Naive thymus-derived CD4-positive, alpha-beta T cell (primary cell): ENCODE measurements at regions of chr10 and their contacts with region 1.

Region 1: GRCh38 chr10:46030091-46030937 is at the start of gene NCOA4:
- DNase-seq: peak; percentile 88 to 96 (median 93)
- ATAC-seq: peak; percentile 98
- H3K4me3 ChIP-seq: peak within 1 kb of the TSS; percentile 70
- H3K4me3 Mint-ChIP-seq: peak within 1 kb of the TSS; percentile 89 to 100 (median 96)
- H3K27ac ChIP-seq: peak within 1 kb of the TSS; percentile 93
- H3K27ac Mint-ChIP-seq: peak within 1 kb of the TSS; percentile 89 to 99 (median 96)
- H3K4me1 ChIP-seq: peaks cover 27 to 42% of the 10 kb centered on the region in 2 donors
- H3K4me1 Mint-ChIP-seq: peaks cover 44 to 57% (median 55%) of the 10 kb centered on the region in 7 donors
- H3K27me3 ChIP-seq: no peaks in the 10 kb centered on the region
- H3K27me3 Mint-ChIP-seq: peaks cover 0 to 4% (median 0%) of the 10 kb centered on the region in 5 donors
- total RNA-seq, gene NCOA4: 54.6 to 126 (median 78.4) TPM

Region 2: GRCh38 chr10:45235798-45236231 is 794.5 kb before region 1 on chr10:
- CTCF ChIA-PET with region 1: interaction called, 4 read pairs
- POLR2A ChIA-PET with region 1: no interaction called
- intact Hi-C with region 1: loop called (anchors 1 to 5 kb)
- DNase-seq: no peak
- ATAC-seq: no peak
- H3K4me3 ChIP-seq: no peak overlapping the region
- H3K4me3 Mint-ChIP-seq: no peak overlapping the region
- H3K27ac ChIP-seq: no peak overlapping the region
- H3K27ac Mint-ChIP-seq: no peak overlapping the region
- H3K4me1 ChIP-seq: no peaks in the 10 kb centered on the region
- H3K4me1 Mint-ChIP-seq: peaks cover 0 to 17% (median 4%) of the 10 kb centered on the region in 7 donors
- H3K27me3 ChIP-seq: no peaks in the 10 kb centered on the region
- H3K27me3 Mint-ChIP-seq: peaks cover 5 to 10% (median 6%) of the 10 kb centered on the region in 5 donors

Region 3: GRCh38 chr10:45249978-45250693 is 780.2 kb before region 1 on chr10:
- CTCF ChIA-PET with region 1: no interaction called
- POLR2A ChIA-PET with region 1: no interaction called
- intact Hi-C with region 1: loop called (anchors 1 to 5 kb)
- DNase-seq: peak in 7 of 9 donors; percentile 20 to 70 (median 50)
- ATAC-seq: peak; percentile 72
- H3K4me3 ChIP-seq: no peak overlapping the region
- H3K4me3 Mint-ChIP-seq: peak overlapping the region in 6 of 10 donors; percentile 3 to 64 (median 46)
- H3K27ac ChIP-seq: no peak overlapping the region
- H3K27ac Mint-ChIP-seq: no peak overlapping the region
- H3K4me1 ChIP-seq: peaks cover 0 to 4% of the 10 kb centered on the region in 2 donors
- H3K4me1 Mint-ChIP-seq: peaks cover 0 to 20% (median 6%) of the 10 kb centered on the region in 7 donors
- H3K27me3 ChIP-seq: no peaks in the 10 kb centered on the region
- H3K27me3 Mint-ChIP-seq: peaks cover 0 to 19% (median 4%) of the 10 kb centered on the region in 5 donors

Region 4: DNA sequence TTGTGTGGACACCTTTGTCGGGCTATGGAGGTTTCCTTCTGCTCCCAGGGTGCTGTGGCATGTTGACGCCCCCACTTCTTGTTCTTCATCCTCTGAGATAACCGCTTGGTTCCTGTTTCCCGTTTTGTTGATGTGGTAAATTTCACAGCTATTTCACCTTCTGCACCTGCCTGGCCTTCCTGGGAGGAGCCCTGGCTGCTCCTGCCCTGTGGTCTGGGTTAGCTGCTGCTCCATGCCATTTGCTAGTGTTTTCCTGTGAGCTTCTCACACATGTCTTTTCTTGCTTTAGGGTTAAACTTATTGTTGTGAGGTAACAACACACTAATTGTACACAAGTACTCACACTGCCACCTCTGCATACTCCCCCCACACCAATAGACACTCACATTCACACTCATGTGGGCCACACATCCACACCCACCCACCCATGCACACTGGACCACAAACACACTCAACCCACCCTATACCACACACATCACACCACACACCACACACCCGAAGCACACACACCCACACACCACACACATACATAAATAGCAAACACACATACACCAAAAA is 62.3 kb after region 1 on chr10:
- CTCF ChIA-PET with region 1: interaction called, 7 read pairs
- POLR2A ChIA-PET with region 1: interaction called, 9 read pairs
- intact Hi-C with region 1: loop called (anchors 2 to 5 kb)
- DNase-seq: peak in 7 of 9 donors; percentile 47 to 78 (median 74)
- ATAC-seq: peak; percentile 49
- H3K4me3 ChIP-seq: peak overlapping the region; percentile 72
- H3K4me3 Mint-ChIP-seq: no peak overlapping the region
- H3K27ac ChIP-seq: peak overlapping the region; percentile 80
- H3K27ac Mint-ChIP-seq: no peak overlapping the region
- H3K4me1 ChIP-seq: peaks cover 63 to 73% of the 10 kb centered on the region in 2 donors
- H3K4me1 Mint-ChIP-seq: peaks cover 4 to 44% (median 29%) of the 10 kb centered on the region in 7 donors
- H3K27me3 ChIP-seq: no peaks in the 10 kb centered on the region
- H3K27me3 Mint-ChIP-seq: no peaks in the 10 kb centered on the region

Region 5: DNA sequence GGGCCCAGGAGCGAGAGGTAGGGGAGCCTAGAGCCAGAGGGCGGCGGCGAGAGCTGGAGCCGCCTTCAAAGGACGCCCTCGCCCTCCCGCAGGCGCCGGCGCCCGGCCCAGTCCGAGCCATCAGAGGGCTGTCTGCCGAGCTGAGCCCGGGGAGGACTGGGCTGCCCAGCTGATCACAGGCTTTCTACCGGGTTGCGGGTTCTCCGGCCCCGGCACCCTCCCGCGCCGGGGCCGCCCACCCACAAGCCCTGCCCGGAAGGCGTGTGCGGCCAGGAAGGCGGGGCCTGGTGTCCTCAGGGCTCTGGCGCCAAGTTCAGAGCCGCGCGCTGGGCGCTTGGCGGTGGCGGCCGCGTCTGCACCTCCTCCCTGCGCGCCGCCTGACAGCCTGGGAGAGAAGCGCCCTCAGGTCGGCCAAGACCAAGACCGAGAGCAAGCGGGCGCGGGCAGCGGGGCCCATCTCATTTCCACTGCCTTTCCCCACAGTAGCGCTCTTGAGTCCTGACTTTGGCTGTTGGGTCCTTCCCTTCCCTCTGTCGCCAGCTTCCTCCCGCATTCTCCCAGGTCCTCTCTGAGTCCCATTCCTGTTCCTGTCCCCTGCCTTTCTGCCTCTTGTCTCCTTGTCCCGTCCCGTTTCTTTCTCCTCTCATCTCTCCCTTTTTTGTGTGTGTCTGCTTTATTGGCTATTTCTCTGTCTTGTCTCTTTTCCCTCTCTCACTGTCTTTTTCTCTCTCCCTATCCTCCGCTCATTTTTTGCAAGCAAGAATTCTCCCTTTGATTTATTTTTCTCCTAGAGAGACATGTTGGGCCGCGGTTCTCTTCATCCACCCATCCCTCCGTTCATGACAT is 76.3 kb after region 1 on chr10:
- CTCF ChIA-PET with region 1: no interaction called
- POLR2A ChIA-PET with region 1: interaction called, 4 read pairs
- intact Hi-C with region 1: loop called in 1 of 2 experiments (anchors 2 kb)
- DNase-seq: peak in 8 of 9 donors; percentile 34 to 67 (median 40)
- ATAC-seq: peak; percentile 95
- H3K4me3 ChIP-seq: peak overlapping the region; percentile 54
- H3K4me3 Mint-ChIP-seq: peak overlapping the region; percentile 82 to 98 (median 91)
- H3K27ac ChIP-seq: peak overlapping the region; percentile 72
- H3K27ac Mint-ChIP-seq: peak overlapping the region in 8 of 9 donors; percentile 1 to 93 (median 76)
- H3K4me1 ChIP-seq: peaks cover 6 to 7% of the 10 kb centered on the region in 2 donors
- H3K4me1 Mint-ChIP-seq: peaks cover 10 to 23% (median 17%) of the 10 kb centered on the region in 7 donors
- H3K27me3 ChIP-seq: no peaks in the 10 kb centered on the region
- H3K27me3 Mint-ChIP-seq: peaks cover 0 to 30% (median 0%) of the 10 kb centered on the region in 5 donors

Region 6: GRCh38 chr10:46284293-46285229 is 254.2 kb after region 1 on chr10:
- CTCF ChIA-PET with region 1: no interaction called
- POLR2A ChIA-PET with region 1: no interaction called
- intact Hi-C with region 1: loop called in 1 of 2 experiments (anchors 2 kb)
- DNase-seq: peak; percentile 48 to 91 (median 65)
- ATAC-seq: peak; percentile 90
- H3K4me3 ChIP-seq: peak overlapping the region; percentile 58
- H3K4me3 Mint-ChIP-seq: peak overlapping the region; percentile 85 to 99 (median 93)
- H3K27ac ChIP-seq: peak overlapping the region; percentile 65
- H3K27ac Mint-ChIP-seq: peak overlapping the region; percentile 68 to 92 (median 86)
- H3K4me1 ChIP-seq: peaks cover 0 to 4% of the 10 kb centered on the region in 2 donors
- H3K4me1 Mint-ChIP-seq: peaks cover 14 to 35% (median 19%) of the 10 kb centered on the region in 7 donors
- H3K27me3 ChIP-seq: no peaks in the 10 kb centered on the region
- H3K27me3 Mint-ChIP-seq: peaks cover 0 to 34% (median 0%) of the 10 kb centered on the region in 5 donors